ENCODE measurements at regions of chr10 and their contacts with region 1.

Region 1: GRCh38 chr10:21754410-21755011 is 220.5 kb downstream of the MLLT10 start:
- DNase-seq: no peak
- ATAC-seq: no peak
- H3K4me3 ChIP-seq: no peak overlapping the region
- H3K27ac ChIP-seq: no peak overlapping the region
- H3K4me1 ChIP-seq: peaks cover 0 to 10% (median 0%) of the 10 kb centered on the region in 12 donors
- H3K27me3 ChIP-seq: no peaks in the 10 kb centered on the region
- CTCF ChIP-seq: no peak
- POLR2A ChIP-seq: no peak

Region 2: DNA sequence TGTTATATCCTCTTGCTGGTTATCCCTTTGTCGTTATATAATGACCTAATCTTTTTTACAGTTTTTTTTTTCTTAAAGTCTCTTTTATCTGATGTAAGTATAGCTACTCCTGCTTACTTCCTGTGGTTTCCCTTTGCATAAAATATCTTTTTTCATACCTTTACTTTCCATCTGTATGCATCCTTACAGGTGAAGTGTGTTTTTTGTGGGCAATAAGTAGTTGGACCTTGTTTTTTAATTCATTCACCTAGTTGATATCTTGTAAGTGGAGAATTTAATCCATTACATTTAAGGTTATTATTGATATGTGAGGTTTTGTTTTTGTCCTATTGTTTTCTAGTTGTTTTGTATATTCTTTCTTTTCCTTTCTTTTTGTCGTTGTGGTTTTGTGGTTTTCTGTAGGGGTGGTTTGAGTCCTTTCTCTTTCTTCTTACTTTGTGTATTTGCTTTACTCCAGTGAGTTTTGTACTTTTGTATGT is 51.8 kb before region 1 on chr10:
- intact Hi-C with region 1: no loop called
- DNase-seq: no peak
- ATAC-seq: no peak
- H3K4me3 ChIP-seq: no peak overlapping the region
- H3K27ac ChIP-seq: no peak overlapping the region
- H3K4me1 ChIP-seq: peaks cover 0 to 11% (median 0%) of the 10 kb centered on the region in 12 donors
- H3K27me3 ChIP-seq: no peaks in the 10 kb centered on the region
- CTCF ChIP-seq: no peak
- POLR2A ChIP-seq: no peak

Region 3: GRCh38 chr10:21953585-21954057 is 199.1 kb after region 1 on chr10:
- intact Hi-C with region 1: loop called in 1 of 10 experiments (anchors 10 kb)
- DNase-seq: no peak
- ATAC-seq: peak in 3 of 4 donors; percentile 42 to 69 (median 58)
- H3K4me3 ChIP-seq: no peak overlapping the region
- H3K27ac ChIP-seq: no peak overlapping the region
- H3K4me1 ChIP-seq: peaks cover 0 to 18% (median 3%) of the 10 kb centered on the region in 12 donors
- H3K27me3 ChIP-seq: no peaks in the 10 kb centered on the region
- CTCF ChIP-seq: peak; percentile 32 to 60 (median 40)
- POLR2A ChIP-seq: no peak

Measured in heart left ventricle (tissue), 16 donors.